ENCODE measurements at regions of chr22 and their contacts with region 1.

Region 1: DNA sequence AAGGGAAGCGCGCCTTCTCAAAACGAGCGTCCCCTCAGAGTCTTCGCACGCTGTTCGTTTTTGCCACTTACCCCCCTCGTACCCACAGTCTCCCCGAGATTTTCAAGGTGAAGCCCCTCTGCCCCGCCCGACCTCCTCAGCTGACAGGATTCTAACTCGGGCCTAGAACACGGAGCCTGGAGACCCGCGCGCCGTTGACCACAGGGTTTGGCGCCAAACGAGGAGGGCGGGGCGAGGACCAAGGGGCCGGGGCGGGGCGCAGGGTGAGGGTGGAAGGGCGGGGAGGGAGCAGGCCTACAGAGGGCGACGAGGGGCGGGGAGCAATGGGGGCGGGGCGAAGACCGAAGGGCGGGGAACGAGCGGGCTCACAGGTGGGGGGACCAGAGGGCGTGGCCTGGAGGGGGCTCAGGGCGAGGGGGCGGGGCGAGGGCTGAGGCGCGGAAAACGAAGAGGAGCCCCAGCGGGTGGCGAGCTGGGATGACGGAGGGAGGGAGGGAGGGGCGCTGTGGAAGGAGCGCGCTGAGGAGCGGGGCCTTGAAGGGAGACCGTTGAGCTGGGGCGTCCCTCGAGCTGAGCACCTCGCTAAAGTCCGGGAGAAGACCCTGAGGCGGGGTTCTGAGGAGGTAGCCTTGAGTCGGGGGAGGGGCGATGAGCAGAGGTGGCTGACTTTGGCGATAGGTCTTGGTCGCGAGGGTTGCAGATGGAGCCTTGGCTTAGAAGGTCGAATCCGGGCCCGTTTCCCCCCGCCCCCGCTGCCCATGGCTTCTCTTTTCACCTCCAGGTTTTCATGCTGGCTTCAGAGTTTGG is at the start of gene DMC1:
- DNase-seq: peak; percentile 93
- H3K4me3 Mint-ChIP-seq: peak within 1 kb of the TSS; percentile 94
- H3K27ac Mint-ChIP-seq: peak within 1 kb of the TSS; percentile 74
- H3K4me1 Mint-ChIP-seq: peaks cover 37% of the 10 kb centered on the region
- H3K27me3 Mint-ChIP-seq: no peaks in the 10 kb centered on the region
- CTCF ChIP-seq: no peak
- total RNA-seq, gene DMC1: 4.1 and 4.4 TPM in 2 replicates

Region 2: DNA sequence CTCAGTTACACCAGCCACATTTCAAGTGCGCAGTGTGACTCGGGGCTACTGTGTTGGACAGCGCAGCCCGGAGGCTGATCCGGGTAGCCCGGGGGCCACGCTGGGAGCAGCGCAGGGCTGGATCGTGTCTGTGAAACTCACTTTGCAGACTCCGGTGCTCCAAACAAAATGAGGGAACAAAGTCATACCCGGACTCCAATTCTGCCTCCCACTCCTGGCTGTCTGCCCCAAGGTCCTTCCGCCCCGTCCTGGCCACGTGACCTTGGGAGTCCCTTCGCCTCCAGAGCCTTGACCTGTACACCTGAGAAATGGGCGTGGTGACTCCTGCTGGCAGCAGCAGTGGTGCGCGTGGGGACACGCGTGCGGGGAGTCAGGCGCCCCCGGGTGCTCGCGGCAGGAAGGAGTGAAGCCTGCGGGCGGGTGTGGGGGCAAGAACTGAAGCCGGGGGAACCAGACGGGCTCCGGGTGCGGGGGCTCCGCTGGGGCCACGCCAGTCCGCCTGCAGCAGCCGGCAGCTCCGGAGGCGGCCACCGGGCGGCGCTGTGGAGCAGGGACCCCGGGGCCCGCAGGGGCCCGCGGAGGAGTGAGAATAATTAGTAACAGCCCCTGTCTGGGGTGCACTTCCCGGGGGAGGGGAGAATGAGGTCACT is 157.6 kb before region 1 on chr22:
- CTCF ChIA-PET with region 1: interaction called, 3 read pairs
- intact Hi-C with region 1: loop called (anchors 5 kb)
- DNase-seq: peak; percentile 46
- H3K4me3 Mint-ChIP-seq: peak overlapping the region; percentile 61
- H3K27ac Mint-ChIP-seq: no peak overlapping the region
- H3K4me1 Mint-ChIP-seq: no peaks in the 10 kb centered on the region
- H3K27me3 Mint-ChIP-seq: no peaks in the 10 kb centered on the region
- CTCF ChIP-seq: peak; percentile 97

Region 3: GRCh38 chr22:38504731-38505540 is 65.2 kb before region 1 on chr22:
- CTCF ChIA-PET with region 1: interaction called, 4 read pairs
- intact Hi-C with region 1: loop called (anchors 5 kb)
- DNase-seq: peak; percentile 40
- H3K4me3 Mint-ChIP-seq: peak overlapping the region; percentile 99
- H3K27ac Mint-ChIP-seq: peak overlapping the region; percentile 100
- H3K4me1 Mint-ChIP-seq: peaks cover 37% of the 10 kb centered on the region
- H3K27me3 Mint-ChIP-seq: no peaks in the 10 kb centered on the region
- CTCF ChIP-seq: no peak

Measured in Calu3 (cell line).